OCI-LY7 (cell line): ENCODE measurements at regions of chr13 and their contacts with region 1.

Region 1: GRCh38 chr13:90696254-90696653 is 651.2 kb upstream of the MIR17HG start:
- DNase-seq: no peak
- H3K4me3 ChIP-seq: no peak overlapping the region
- H3K27ac ChIP-seq: no peak overlapping the region
- H3K4me1 ChIP-seq: no peaks in the 10 kb centered on the region
- CTCF ChIP-seq: no peak

Region 2: DNA sequence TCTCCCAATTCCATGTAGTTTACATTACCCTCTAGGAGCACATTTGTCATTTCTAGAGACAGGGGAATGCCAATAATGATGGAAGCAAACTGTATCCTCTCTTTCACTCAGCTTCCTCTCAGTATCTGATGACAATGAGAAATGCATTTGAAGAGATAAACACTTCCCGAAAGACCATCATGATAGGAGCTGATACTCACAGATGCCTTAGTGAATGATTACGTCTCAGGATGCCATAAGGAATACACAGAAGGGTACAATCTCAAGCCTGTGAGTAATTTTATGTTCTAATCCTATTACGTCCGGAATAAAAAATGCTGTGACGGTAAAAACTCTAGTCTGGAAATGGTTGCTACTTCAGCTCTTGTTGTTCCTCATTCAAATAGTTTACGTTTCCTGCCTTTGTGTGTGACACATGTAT is 12.5 kb before region 1 on chr13:
- CTCF ChIA-PET with region 1: no interaction called
- POLR2A ChIA-PET with region 1: interaction called, 5 read pairs
- intact Hi-C with region 1: loop called (anchors 2 kb)
- DNase-seq: no peak
- H3K4me3 ChIP-seq: no peak overlapping the region
- H3K27ac ChIP-seq: no peak overlapping the region
- H3K4me1 ChIP-seq: no peaks in the 10 kb centered on the region
- CTCF ChIP-seq: no peak